K562 (cell line): ENCODE measurements at regions of chr7 and their contacts with region 1.

Region 1: GRCh38 chr7:37201003-37201875 is 247.4 kb downstream of the ELMO1 start:
- DNase-seq: peak; percentile 68 to 73 (median 70)
- ATAC-seq: peak; percentile 92
- H3K4me3 ChIP-seq: no peak overlapping the region
- H3K27ac ChIP-seq: no peak overlapping the region
- H3K4me1 ChIP-seq: no peaks in the 10 kb centered on the region
- H3K27me3 ChIP-seq: no peaks in the 10 kb centered on the region
- CTCF ChIP-seq: peak; percentile 79 to 82 (median 82)
- EP300 ChIP-seq: no peak
- POLR2A ChIP-seq: no peak
- RAD21 ChIP-seq: peak; percentile 76 to 77

Region 2: DNA sequence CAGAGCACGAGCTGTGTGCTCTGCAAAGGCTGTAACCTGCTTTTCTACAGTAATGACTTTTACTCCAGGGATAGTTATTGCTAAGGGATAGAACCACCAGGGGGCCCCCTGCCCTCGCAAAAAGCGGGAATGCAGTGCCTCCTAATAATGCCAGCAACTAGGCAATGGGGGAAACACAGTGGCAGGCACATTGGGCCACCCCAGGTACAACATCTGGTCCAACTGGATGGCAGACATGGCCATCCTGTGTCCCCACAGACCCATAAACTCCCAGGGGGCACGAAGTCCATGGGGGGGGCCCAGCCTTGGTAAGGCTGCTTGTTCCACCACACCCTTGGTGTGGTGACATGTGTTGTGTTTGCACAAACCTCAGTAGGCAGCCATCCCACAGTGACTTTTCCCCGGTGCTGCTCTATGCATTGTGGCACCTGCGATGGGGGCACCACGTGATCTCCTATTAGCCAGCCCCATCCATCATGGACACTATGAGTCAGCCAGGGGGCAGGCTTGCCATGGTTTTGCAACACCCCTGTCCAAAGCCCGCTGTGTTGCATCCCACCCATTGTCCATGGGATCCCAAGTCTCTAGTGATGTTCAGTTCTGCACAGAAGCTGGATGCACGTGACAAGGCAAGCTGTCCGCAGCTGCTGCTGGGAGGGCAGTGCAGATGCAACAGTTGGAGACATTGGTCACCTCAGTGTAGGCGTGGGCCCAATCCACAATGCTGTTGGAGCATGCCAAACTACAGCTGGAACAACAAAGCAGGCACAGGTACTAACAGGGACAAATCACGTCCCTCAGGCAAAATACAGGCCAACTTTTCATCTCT is 727.6 kb before region 1 on chr7:
- CTCF ChIA-PET with region 1: interaction called, 3 read pairs
- POLR2A ChIA-PET with region 1: no interaction called
- in situ Hi-C with region 1: loop called (anchors 10 kb)
- intact Hi-C with region 1: loop called (anchors 1 kb)
- DNase-seq: peak; percentile 51 to 70 (median 58)
- ATAC-seq: peak; percentile 90
- H3K4me3 ChIP-seq: no peak overlapping the region
- H3K27ac ChIP-seq: 0 out of 3 replicates have a peak overlapping the region, but pooled peaks have one; percentile 9
- H3K4me1 ChIP-seq: peaks cover 8 to 12% of the 10 kb centered on the region in 2 experiments; a peak in 3 of 5 replicates
- H3K27me3 ChIP-seq: no peaks in the 10 kb centered on the region; a peak in 1 of 5 replicates
- CTCF ChIP-seq: peak; percentile 81 to 88 (median 83)
- EP300 ChIP-seq: no peak
- POLR2A ChIP-seq: no peak
- RAD21 ChIP-seq: peak; percentile 85 to 91

Region 3: GRCh38 chr7:36487756-36488336 is 713.4 kb before region 1 on chr7:
- CTCF ChIA-PET with region 1: interaction called, 3 read pairs
- POLR2A ChIA-PET with region 1: no interaction called
- in situ Hi-C with region 1: no loop called
- intact Hi-C with region 1: loop called (anchors 5 kb)
- DNase-seq: peak in 1 of 4 experiments; percentile 37
- ATAC-seq: peak; percentile 55; the same call in 2 of the 3 replicates
- H3K4me3 ChIP-seq: no peak overlapping the region
- H3K27ac ChIP-seq: no peak overlapping the region
- H3K4me1 ChIP-seq: no peaks in the 10 kb centered on the region
- H3K27me3 ChIP-seq: peaks cover 4 to 17% of the 10 kb centered on the region in 2 experiments; a peak in 3 of 5 replicates
- CTCF ChIP-seq: peak; percentile 54 to 73 (median 57); a peak in 5 of 6 replicates
- EP300 ChIP-seq: no peak
- POLR2A ChIP-seq: no peak
- RAD21 ChIP-seq: peak; percentile 77 to 92

Region 4: GRCh38 chr7:36967387-36967786 is 233.9 kb before region 1 on chr7:
- CTCF ChIA-PET with region 1: interaction called, 3 read pairs
- POLR2A ChIA-PET with region 1: no interaction called
- in situ Hi-C with region 1: no loop called
- intact Hi-C with region 1: loop called (anchors 5 kb)
- DNase-seq: peak; percentile 48 to 63 (median 61)
- ATAC-seq: peak; percentile 98
- H3K4me3 ChIP-seq: no peak overlapping the region
- H3K27ac ChIP-seq: no peak overlapping the region
- H3K4me1 ChIP-seq: no peaks in the 10 kb centered on the region
- H3K27me3 ChIP-seq: no peaks in the 10 kb centered on the region
- CTCF ChIP-seq: peak; percentile 68 to 79 (median 73)
- EP300 ChIP-seq: no peak
- POLR2A ChIP-seq: no peak
- RAD21 ChIP-seq: peak; percentile 51 to 65

Region 5: DNA sequence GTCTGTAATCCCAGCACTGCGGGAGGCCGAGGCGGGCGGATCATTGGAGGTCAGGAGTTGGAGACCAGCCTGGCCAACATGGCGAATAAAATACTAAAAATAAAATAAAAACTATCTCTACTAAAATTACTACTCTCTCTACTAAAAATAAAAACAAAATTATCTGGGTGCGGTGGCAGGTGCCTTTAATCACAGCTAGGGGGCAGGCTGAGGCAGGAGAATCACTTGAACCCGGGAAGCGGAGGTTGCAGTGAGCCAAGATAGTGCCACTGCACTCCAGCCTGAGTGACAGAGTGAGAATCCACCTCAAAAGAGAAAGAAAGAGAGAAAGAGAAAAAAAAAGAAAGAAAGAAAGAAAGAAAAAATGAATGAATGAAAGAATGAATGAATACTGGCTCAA is 104.0 kb before region 1 on chr7:
- CTCF ChIA-PET with region 1: no interaction called
- POLR2A ChIA-PET with region 1: no interaction called
- in situ Hi-C with region 1: no loop called
- intact Hi-C with region 1: loop called (anchors 5 kb)
- DNase-seq: peak in 1 of 4 experiments; percentile 5
- ATAC-seq: no peak
- H3K4me3 ChIP-seq: no peak overlapping the region
- H3K27ac ChIP-seq: no peak overlapping the region
- H3K4me1 ChIP-seq: no peaks in the 10 kb centered on the region
- H3K27me3 ChIP-seq: no peaks in the 10 kb centered on the region
- CTCF ChIP-seq: peak; percentile 13 to 37 (median 29); a peak in 2 of 6 replicates
- EP300 ChIP-seq: no peak
- POLR2A ChIP-seq: no peak
- RAD21 ChIP-seq: peak; percentile 31 to 56